ENCODE measurements at regions of chr11 and their contacts with region 1.

Region 1: GRCh38 chr11:120547811-120548681 is 36.5 kb downstream of the GRIK4 start:
- DNase-seq: peak; percentile 81
- H3K4me3 ChIP-seq: no peak overlapping the region
- H3K27ac ChIP-seq: no peak overlapping the region
- H3K4me1 ChIP-seq: peaks cover 6% of the 10 kb centered on the region
- H3K27me3 ChIP-seq: no peaks in the 10 kb centered on the region
- CTCF ChIP-seq: peak; percentile 13; the same call in 1 of the 2 replicates

Region 2: GRCh38 chr11:120633616-120634393 is 85.8 kb after region 1 on chr11:
- CTCF ChIA-PET with region 1: no interaction called
- POLR2A ChIA-PET with region 1: interaction called, 11 read pairs
- intact Hi-C with region 1: no loop called
- DNase-seq: peak; percentile 74
- H3K4me3 ChIP-seq: no peak overlapping the region
- H3K27ac ChIP-seq: no peak overlapping the region
- H3K4me1 ChIP-seq: peaks cover 25% of the 10 kb centered on the region
- H3K27me3 ChIP-seq: peaks cover 19% of the 10 kb centered on the region
- CTCF ChIP-seq: no peak